Heart left ventricle (tissue), 16 donors: ENCODE measurements at regions of chr9 and their contacts with region 1.

Region 1: DNA sequence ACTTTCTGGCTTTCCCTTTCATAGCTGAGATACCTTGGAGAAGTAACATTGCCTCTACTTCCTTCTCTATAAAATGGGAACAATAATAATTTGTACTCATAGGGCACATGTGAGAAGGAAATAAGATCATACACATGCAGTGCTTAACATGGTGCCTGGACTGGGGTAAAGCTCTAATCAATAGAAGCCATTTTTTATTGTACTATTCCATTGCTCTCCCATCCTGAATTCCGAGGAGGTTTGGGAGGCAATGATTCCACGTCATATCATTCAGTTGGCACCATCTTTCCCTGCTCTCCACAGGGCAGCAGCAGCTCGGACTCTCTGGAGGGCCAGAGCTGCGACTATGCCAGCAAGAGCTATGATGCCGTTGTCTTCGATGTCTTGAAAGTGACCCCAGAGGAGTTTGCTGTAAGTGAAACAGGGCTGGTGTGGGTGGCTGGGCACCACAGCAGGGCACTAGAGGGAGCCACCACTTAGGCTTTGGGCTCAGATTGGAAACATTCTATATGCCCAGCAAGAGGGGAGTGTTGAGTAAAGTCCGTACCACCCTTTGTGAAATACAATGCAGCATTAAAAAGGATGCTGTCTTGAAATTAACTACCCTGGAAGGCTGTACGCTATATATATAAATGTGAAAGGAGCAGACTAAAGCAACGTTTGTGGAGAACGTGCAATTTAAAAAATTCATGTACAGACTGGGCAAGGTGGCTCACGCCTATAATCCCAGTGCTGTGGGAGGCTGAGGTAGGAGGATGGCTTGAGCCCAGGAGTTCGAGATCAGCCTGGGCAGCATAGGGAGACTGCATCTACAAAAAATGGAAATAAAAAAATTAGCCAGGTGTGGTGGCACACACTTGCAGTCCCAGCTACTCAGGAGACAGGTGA is 51.2 kb downstream of the RALGPS1 start:
- DNase-seq: peak in 4 of 5 donors; percentile 43 to 60 (median 47)
- ATAC-seq: peak; percentile 74 to 89 (median 82)
- H3K4me3 ChIP-seq: no peak overlapping the region
- H3K27ac ChIP-seq: peak overlapping the region in 10 of 12 donors; percentile 13 to 86 (median 62)
- H3K4me1 ChIP-seq: peaks cover 0 to 32% (median 12%) of the 10 kb centered on the region in 12 donors
- H3K27me3 ChIP-seq: no peaks in the 10 kb centered on the region
- CTCF ChIP-seq: peak; percentile 67 to 88 (median 79)
- POLR2A ChIP-seq: no peak

Region 2: GRCh38 chr9:127083138-127083980 is 117.6 kb after region 1 on chr9:
- intact Hi-C with region 1: loop called in 1 of 10 experiments (anchors 10 kb)
- DNase-seq: no peak
- ATAC-seq: peak; percentile 29 to 59 (median 50)
- H3K4me3 ChIP-seq: no peak overlapping the region
- H3K27ac ChIP-seq: peak overlapping the region in 3 of 12 donors; percentile 2 to 27 (median 20)
- H3K4me1 ChIP-seq: peaks cover 0 to 38% (median 16%) of the 10 kb centered on the region in 12 donors
- H3K27me3 ChIP-seq: no peaks in the 10 kb centered on the region
- CTCF ChIP-seq: no peak
- POLR2A ChIP-seq: no peak

Region 3: DNA sequence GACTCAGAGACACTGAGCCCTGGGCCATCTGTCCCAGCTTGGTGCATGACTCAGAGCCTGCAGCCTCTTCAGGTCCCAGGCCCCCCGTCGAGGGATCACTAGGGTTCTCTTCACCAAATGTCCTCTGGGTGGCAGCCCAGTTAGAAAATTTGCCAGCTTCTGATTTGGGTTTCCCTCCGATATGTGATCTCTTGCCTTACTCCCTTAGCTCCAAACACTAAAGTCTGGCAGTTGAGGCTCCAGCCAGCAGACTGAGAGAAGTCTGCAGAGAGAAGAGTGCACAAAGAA is 239.3 kb after region 1 on chr9:
- intact Hi-C with region 1: loop called in 1 of 10 experiments (anchors 10 kb)
- DNase-seq: peak in 2 of 5 donors; percentile 59 to 67
- ATAC-seq: peak; percentile 23 to 66 (median 52)
- H3K4me3 ChIP-seq: no peak overlapping the region
- H3K27ac ChIP-seq: no peak overlapping the region
- H3K4me1 ChIP-seq: peaks cover 0 to 12% (median 1%) of the 10 kb centered on the region in 12 donors
- H3K27me3 ChIP-seq: no peaks in the 10 kb centered on the region
- CTCF ChIP-seq: peak in 8 of 12 donors; percentile 10 to 44 (median 22)
- POLR2A ChIP-seq: no peak